Activated CD8-positive, alpha-beta T cell treated with anti-CD3 and anti-CD28 coated beads, Interleukin-2, amount 10 ng/mL, durations not matched to agents 7 days and 5 days (primary cell): ENCODE measurements at regions of chr1 and their contacts with region 1.

Region 1: DNA sequence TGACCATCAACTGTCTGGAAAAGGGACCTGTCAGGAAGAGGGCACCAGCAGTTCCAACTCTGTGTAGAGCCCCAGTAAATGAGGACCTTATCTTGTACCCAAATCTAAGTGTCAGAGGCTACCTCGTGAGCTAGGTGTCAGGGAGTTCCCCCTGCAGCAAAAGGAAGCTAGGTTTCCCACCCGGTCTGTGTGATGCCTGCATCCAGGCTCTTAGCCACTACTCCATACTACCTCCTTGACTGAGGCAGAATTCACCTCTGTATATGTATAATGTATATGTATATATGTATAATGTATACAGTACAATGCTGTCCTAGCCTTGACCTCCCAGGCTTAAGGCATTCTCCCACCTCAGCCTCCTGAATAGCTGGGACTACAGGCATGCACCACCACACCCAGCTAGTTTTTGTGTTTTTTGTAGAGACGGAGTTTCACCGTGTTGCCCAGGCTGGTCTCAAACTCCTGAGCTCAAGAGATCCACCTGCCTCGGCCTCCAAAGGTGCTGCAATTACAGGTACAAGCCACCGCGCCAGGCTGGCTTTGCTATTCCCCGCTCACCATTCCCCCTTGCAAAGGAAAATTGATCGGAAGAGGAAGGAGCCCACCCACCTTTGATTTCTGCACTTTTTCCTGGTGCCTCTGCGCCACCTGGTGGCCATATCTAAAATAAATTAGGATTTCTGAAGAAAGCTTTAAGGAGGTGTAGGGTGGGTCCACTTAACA is 15.7 kb upstream of the LUZP1 start:
- DNase-seq: peak; percentile 47
- ATAC-seq: no peak
- H3K4me3 Mint-ChIP-seq: peak overlapping the region; percentile 32
- H3K27ac Mint-ChIP-seq: no peak overlapping the region
- H3K4me1 Mint-ChIP-seq: peaks cover 5% of the 10 kb centered on the region
- H3K27me3 Mint-ChIP-seq: peaks cover 28% of the 10 kb centered on the region

Region 2: DNA sequence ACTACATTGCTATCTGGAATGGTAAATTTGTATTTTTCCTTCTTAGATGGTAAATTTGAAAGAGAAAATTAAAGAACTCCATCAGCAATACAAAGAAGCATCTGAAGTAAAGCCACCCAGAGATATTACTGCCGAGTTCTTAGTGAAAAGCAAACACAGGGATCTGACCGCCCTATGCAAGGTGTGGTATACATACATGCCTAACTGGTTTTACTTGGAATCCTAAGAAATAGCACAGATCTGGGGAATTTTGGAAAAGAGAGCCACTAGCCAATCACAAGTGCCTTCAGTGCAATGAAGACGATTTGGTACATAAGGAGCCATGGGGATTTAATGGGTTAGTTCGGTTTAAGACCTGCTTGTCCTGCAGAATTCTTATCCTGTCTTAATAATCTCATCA is 113.2 kb before region 1 on chr1:
- CTCF ChIA-PET with region 1: interaction called, 16 read pairs
- POLR2A ChIA-PET with region 1: no interaction called
- DNase-seq: no peak
- ATAC-seq: no peak
- H3K4me3 Mint-ChIP-seq: no peak overlapping the region
- H3K27ac Mint-ChIP-seq: no peak overlapping the region
- H3K4me1 Mint-ChIP-seq: peaks cover 4% of the 10 kb centered on the region
- H3K27me3 Mint-ChIP-seq: no peaks in the 10 kb centered on the region

Region 3: DNA sequence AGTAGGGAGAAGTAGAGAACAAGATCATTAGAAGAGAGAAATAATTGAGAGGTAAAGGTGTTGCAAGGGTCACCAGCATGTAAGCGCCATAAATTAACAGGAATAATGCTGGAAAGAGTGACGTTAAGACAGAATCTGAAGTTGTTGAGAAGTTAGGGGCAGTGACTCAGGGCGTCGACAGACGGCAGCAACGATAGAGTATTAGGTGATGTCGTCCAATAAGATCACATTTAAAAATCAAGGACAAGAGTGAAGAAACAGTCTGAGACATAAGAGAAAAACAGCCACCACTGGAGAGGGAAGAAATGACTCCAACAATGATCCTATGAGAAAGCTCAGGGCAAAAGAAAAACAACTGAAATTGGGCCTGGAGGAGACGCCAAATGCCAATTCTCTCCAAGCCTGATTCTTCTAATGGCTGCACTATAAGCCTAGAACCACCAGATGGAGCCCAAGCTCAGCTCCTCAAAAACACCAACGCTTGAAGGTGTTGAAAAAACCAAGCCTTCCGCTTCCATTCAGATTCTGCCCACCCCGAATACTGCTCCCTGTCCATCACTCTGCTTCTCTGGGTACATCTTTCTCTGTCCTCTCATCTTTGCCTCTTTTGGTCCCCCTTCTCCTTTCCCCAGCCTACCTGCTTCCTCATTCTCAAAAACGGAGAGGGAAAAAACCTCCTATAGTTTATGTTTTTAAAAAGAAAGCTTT is 85.8 kb before region 1 on chr1:
- CTCF ChIA-PET with region 1: interaction called, 735 read pairs
- POLR2A ChIA-PET with region 1: interaction called, 19 read pairs
- DNase-seq: peak; percentile 77
- ATAC-seq: peak; percentile 32
- H3K4me3 Mint-ChIP-seq: no peak overlapping the region
- H3K27ac Mint-ChIP-seq: no peak overlapping the region
- H3K4me1 Mint-ChIP-seq: peaks cover 44% of the 10 kb centered on the region
- H3K27me3 Mint-ChIP-seq: no peaks in the 10 kb centered on the region

Region 4: DNA sequence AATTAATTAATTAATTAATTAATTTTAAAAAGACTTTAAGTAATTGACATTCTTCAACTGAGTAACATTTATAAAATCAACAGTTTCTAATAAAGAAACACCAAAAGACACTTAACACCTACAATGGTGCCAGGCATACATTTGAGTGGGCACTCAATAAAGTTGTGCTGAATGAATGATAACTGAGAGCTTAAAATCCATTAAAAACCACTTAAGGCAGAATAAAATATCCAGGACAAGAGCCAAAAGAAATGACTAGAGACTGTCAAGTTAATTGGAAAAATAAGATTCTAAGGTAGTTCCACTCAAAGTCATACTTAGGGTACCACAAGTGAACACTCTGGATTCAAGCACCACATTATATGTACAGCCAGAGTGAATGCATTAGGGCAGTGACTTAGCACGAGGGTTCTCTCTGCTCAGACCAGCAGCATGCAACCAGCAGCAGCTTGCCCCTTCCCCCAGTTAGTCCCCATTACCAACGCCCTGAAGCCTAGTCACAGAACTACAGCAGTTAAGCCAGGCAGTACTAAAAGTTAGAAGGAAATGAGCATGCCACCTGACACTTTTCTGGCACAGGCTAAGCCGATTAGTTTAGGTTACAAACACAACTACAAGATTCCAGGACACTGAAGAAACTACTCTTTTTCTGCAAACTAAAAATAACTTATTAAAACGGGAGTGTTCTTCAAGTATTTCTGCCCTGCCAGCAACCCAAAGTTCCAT is 62.2 kb before region 1 on chr1:
- CTCF ChIA-PET with region 1: interaction called, 32 read pairs
- POLR2A ChIA-PET with region 1: no interaction called
- DNase-seq: no peak
- ATAC-seq: no peak
- H3K4me3 Mint-ChIP-seq: no peak overlapping the region
- H3K27ac Mint-ChIP-seq: no peak overlapping the region
- H3K4me1 Mint-ChIP-seq: peaks cover 32% of the 10 kb centered on the region
- H3K27me3 Mint-ChIP-seq: no peaks in the 10 kb centered on the region

Region 5: DNA sequence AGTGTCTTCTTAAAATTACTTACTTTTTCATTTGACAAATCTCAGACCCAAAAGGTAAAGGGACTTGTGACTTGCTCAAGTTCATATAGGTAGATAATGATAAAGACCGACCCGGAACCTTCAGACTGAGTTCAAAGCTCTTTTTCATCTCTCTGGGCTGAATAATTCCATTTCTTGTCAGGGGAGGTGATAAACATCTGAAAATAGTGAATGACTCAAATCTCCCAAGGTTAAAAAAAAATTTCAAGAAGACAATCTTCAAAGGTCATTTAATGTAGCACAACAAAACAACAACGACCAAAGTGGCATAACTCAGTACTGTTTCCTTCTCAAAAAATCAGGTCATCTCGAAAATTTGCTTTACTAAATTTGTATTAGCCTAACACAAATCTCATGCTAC is 36.3 kb before region 1 on chr1:
- CTCF ChIA-PET with region 1: interaction called, 11 read pairs
- POLR2A ChIA-PET with region 1: no interaction called
- DNase-seq: no peak
- ATAC-seq: peak; percentile 69
- H3K4me3 Mint-ChIP-seq: peak overlapping the region; percentile 1
- H3K27ac Mint-ChIP-seq: no peak overlapping the region
- H3K4me1 Mint-ChIP-seq: peaks cover 17% of the 10 kb centered on the region
- H3K27me3 Mint-ChIP-seq: no peaks in the 10 kb centered on the region

Region 6: GRCh38 chr1:23168457-23169194 is 15.7 kb before region 1 on chr1 and contains the start of gene LUZP1:
- CTCF ChIA-PET with region 1: interaction called, 48 read pairs
- POLR2A ChIA-PET with region 1: interaction called, 4 read pairs
- DNase-seq: peak; percentile 90
- ATAC-seq: peak; percentile 85
- H3K4me3 Mint-ChIP-seq: peak within 1 kb of the TSS; percentile 92
- H3K27ac Mint-ChIP-seq: peak within 1 kb of the TSS; percentile 85
- H3K4me1 Mint-ChIP-seq: peaks cover 24% of the 10 kb centered on the region
- H3K27me3 Mint-ChIP-seq: peaks cover 7% of the 10 kb centered on the region
- total RNA-seq, gene LUZP1: 15.2 to 16.0 TPM

Region 7: DNA sequence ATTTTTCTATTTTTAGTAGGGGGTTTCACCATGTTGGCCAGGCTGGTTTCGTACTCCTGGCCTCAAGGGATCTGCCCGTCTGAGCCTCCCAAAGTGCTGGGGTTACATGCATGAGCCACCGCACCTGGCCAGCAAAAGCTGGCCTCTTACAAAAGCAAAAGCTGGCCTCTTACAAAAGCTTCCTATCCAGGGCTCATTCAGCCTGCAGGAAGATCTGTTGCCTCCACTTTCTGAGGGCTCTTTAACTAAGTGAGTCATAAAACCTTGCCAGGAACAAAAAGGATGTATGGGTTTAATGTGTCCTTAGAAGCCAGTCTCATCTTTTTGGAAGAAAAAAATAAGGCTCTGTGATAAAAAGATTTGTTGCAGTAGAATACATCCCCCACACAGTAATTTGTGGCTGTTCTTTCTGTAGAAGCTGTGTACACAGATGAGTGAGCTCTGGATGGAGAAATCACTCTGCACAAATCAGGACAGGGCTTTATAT is 17.9 kb after region 1 on chr1:
- CTCF ChIA-PET with region 1: interaction called, 38 read pairs
- POLR2A ChIA-PET with region 1: no interaction called
- DNase-seq: no peak
- ATAC-seq: no peak
- H3K4me3 Mint-ChIP-seq: no peak overlapping the region
- H3K27ac Mint-ChIP-seq: no peak overlapping the region
- H3K4me1 Mint-ChIP-seq: no peaks in the 10 kb centered on the region
- H3K27me3 Mint-ChIP-seq: peaks cover 8% of the 10 kb centered on the region

Region 8: DNA sequence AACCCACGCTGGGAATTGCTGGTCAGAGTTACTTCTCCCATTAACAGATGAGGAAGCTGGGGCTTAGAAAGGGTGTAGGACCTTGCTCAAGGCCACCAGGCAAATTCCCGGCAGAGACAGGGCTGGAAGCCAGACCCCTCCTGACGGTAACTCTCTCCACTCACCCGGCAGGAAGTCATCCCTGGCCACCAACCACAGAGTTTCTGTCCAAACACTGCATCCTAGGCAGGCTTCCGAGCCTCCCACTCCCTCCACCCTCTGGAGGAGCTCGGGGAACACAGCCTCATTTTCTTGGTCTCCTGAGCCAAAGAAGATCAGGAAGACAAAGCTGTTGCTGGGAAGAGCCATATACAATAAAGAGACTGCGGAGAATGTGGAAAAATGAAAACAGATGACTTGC is 210.3 kb after region 1 on chr1:
- CTCF ChIA-PET with region 1: no interaction called
- POLR2A ChIA-PET with region 1: no interaction called
- DNase-seq: no peak
- ATAC-seq: no peak
- H3K4me3 Mint-ChIP-seq: no peak overlapping the region
- H3K27ac Mint-ChIP-seq: no peak overlapping the region
- H3K4me1 Mint-ChIP-seq: peaks cover 3% of the 10 kb centered on the region
- H3K27me3 Mint-ChIP-seq: no peaks in the 10 kb centered on the region